ENCODE measurements at regions of chr16 and their contacts with region 1.

Region 1: DNA sequence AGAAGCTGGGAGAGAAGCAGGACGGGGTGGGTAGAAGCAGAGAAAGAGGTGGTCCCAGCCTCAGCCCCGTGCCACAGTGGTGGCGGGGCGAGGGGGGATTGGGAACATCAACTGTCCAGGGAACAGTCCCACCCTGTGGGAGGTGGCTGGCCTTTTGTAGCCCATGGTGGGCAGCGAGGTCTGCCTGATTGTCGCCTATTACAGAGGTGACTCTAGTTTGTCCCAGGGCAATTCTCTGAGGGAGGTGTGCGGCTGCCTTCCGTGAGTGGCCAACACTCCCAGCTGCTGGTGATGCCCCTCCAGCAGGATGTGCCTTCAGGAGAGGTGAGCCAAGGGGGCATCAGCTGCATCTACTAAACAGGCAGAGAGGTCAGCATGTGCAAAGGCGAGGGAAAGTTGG is 5.0 kb upstream of the BRD7 start:
- DNase-seq: no peak
- H3K4me3 Mint-ChIP-seq: no peak overlapping the region
- H3K27ac Mint-ChIP-seq: no peak overlapping the region
- H3K4me1 Mint-ChIP-seq: no peaks in the 10 kb centered on the region
- H3K27me3 Mint-ChIP-seq: peaks cover 41% of the 10 kb centered on the region
- CTCF ChIP-seq: no peak

Region 2: DNA sequence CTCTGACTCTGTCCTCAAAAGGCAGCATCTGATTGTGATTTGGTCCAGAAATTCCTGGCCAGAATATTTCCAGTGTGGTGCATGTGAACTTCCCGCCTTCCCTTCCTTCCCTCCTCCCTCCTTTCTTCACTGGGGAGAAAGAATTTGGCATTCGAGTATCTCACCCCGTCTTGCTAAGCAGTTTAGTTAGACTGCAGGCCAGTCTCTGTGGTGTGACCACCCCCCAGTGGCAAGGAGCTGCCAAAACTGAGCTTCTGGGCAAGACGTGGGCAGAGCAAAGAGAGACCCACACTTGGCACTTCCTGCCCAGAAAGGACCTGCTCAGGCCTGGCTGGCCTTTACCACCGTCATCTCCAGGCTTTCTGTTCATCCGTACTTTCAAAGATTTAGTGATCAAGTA is 270.9 kb after region 1 on chr16:
- CTCF ChIA-PET with region 1: interaction called, 24 read pairs
- intact Hi-C with region 1: no loop called
- DNase-seq: peak; percentile 41
- H3K4me3 Mint-ChIP-seq: no peak overlapping the region
- H3K27ac Mint-ChIP-seq: no peak overlapping the region
- H3K4me1 Mint-ChIP-seq: no peaks in the 10 kb centered on the region
- H3K27me3 Mint-ChIP-seq: peaks cover 96% of the 10 kb centered on the region
- CTCF ChIP-seq: no peak

Region 3: DNA sequence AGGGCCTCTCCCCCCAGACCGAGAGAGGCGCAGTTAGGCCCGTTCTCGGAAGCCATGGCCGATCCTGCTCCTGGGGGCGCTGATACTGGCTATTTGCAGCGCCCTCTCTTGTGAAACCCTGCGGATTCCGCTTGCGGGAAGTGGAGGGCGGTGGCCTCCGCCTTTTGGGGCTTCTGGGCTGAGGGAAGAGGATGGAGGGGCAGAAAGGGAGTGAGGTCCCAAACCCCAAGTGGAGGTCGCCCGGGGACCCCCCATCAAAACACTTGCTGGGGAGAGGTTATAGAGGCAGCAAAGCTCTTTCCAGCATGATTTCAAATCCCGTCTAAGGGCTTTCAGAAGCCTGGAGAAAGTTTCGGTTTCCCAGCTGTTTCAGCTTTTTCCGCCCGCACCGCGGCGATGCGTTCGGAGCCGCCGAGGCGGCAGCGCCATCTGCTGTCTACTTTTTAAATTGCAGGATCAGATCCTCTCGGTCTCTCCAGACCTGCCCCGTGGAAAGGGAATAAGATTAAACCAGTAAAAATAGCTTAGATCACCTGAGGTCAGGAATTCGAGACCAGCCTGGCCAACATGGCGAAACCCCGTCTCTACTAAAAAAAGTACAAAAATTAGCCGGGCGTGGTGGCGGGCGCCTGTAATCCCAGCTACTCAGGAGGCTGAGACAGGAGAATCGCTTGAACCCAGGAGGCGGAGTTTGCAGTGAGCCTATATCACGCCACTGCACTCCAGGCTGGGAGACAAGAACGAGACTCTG is 291.5 kb after region 1 on chr16:
- CTCF ChIA-PET with region 1: interaction called, 18 read pairs
- intact Hi-C with region 1: loop called (anchors 1 kb)
- DNase-seq: peak; percentile 92
- H3K4me3 Mint-ChIP-seq: peak overlapping the region; percentile 49
- H3K27ac Mint-ChIP-seq: peak overlapping the region; percentile 21
- H3K4me1 Mint-ChIP-seq: peaks cover 31% of the 10 kb centered on the region
- H3K27me3 Mint-ChIP-seq: no peaks in the 10 kb centered on the region
- CTCF ChIP-seq: peak; percentile 94

Measured in Calu3 (cell line).